Activated T-helper 2 cell treated with anti-CD3 and anti-CD28 coated beads, Interferon-gamma antibody, Interleukin-2, Interleukin-4, amounts not matched to agents 10 μg/mL and 5 μg/mL and 100 μg/mL, durations not matched to agents 14 hours and 24 hours and 36 hours (primary cell): ENCODE measurements at regions of chr6 and their contacts with region 1.

Region 1: DNA sequence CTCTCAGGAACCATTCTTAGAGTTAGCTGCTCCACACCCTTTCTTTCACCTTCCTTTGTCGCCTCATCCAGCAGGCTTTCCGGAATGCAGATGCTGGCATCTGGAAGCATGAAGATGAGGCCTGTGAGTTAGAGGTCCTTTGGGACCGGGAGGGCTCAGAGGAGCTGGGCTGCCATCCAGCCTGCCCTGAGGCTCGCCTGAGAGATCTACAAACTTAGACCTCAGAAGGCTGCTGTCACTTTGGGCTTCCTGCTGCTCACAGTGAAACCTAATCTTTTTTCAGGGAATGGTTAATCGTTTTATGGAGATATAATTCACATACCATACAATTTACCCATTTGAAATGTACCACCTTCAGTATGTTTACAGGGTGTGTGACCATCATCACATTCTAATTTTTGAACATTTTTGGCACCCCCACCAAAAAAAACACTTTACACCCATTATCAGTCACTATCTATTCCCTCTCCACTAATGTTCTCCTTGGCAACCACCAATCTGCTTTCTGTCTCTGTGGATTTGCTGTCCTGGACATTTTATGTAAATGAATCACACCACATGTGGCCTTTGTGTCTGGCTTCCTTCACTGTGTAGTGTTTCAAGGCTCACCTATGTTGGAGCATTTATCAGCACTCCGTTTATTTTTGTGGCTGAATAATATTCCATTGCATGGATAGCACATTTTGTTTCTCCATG is 20.0 kb upstream of the MPC1 start:
- DNase-seq: no peak
- H3K4me3 Mint-ChIP-seq: no peak overlapping the region
- H3K27ac Mint-ChIP-seq: no peak overlapping the region
- H3K4me1 Mint-ChIP-seq: peaks cover 2% of the 10 kb centered on the region
- H3K27me3 Mint-ChIP-seq: peaks cover 4% of the 10 kb centered on the region

Region 2: GRCh38 chr6:166275714-166276166 is 127.0 kb before region 1 on chr6:
- intact Hi-C with region 1: loop called (anchors 1 kb)
- DNase-seq: peak; percentile 68
- H3K4me3 Mint-ChIP-seq: no peak overlapping the region
- H3K27ac Mint-ChIP-seq: no peak overlapping the region
- H3K4me1 Mint-ChIP-seq: peaks cover 6% of the 10 kb centered on the region
- H3K27me3 Mint-ChIP-seq: peaks cover 24% of the 10 kb centered on the region

Region 3: DNA sequence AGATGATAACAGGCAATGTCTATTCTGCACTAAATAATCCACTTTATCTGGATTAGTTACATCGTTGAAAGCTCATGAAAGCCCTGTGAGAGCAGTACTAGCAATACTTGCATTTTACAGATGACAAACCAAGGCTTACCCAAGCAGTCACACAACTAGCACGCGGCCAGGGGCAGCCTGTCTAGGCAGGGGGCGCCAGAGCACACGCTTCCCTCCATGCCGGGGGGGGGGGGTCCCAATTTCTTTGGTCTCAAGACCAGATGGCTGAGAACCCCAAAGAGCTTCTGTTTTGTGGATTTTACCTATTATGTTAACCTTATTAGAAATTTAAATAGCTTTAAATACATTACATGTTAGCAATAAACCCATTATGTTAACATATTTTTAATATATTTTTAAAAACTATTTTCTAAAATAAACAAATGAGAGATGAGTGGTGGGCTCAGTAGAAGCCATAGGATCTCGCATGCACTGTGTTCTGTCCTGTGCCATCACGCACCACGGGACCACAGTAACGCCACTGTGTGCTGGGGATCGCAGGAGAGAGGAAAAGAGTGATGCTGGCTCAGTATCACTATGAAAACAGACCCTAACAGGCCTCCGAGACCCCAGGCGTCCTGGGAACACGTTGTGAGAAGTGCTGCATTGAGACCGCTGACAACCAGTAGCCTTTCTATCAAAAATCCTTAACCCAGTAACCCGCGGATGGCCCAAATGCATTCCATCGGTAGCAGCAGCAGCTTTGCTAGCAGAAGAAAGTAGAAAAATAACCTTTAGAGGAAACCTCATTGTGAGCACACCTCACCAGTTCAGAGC is 89.3 kb before region 1 on chr6:
- intact Hi-C with region 1: loop called (anchors 1 kb)
- DNase-seq: no peak
- H3K4me3 Mint-ChIP-seq: no peak overlapping the region
- H3K27ac Mint-ChIP-seq: no peak overlapping the region
- H3K4me1 Mint-ChIP-seq: no peaks in the 10 kb centered on the region
- H3K27me3 Mint-ChIP-seq: peaks cover 28% of the 10 kb centered on the region